Endothelial cell of umbilical vein (primary cell): ENCODE measurements at regions of chr13 and their contacts with region 1.

Region 1: GRCh38 chr13:56900549-56901279 is 240.0 kb upstream of the PRR20A start:
- DNase-seq: no peak
- H3K4me3 ChIP-seq: no peak overlapping the region
- H3K27ac ChIP-seq: no peak overlapping the region
- H3K4me1 ChIP-seq: no peaks in the 10 kb centered on the region
- H3K27me3 ChIP-seq: no peaks in the 10 kb centered on the region
- CTCF ChIP-seq: no peak
- POLR2A ChIP-seq: no peak

Region 2: DNA sequence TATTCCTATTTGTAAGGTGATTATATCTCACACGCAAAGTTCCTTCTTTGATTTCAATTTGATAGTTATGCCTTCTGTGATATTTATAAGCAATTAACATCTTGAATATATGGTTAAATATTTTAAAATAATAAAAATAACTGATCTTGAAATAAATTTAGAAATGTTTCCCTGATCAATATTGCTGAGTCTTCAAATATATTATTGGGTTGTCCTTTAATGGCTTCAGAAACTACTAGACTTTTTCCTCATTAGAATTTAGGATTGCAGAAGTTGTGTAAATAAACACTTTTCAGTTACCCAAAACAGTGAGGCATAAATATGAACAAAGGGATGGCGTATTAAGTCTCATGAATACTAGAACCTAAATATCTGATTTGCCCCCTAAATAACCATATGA is 12.3 kb before region 1 on chr13:
- CTCF ChIA-PET with region 1: interaction called, 10 read pairs
- POLR2A ChIA-PET with region 1: no interaction called
- dilution Hi-C with region 1: no loop called
- intact Hi-C with region 1: no loop called
- DNase-seq: no peak
- H3K4me3 ChIP-seq: no peak overlapping the region
- H3K27ac ChIP-seq: no peak overlapping the region
- H3K4me1 ChIP-seq: no peaks in the 10 kb centered on the region
- H3K27me3 ChIP-seq: no peaks in the 10 kb centered on the region
- CTCF ChIP-seq: no peak
- POLR2A ChIP-seq: no peak

Region 3: GRCh38 chr13:57314897-57315520 is 414.3 kb after region 1 on chr13:
- CTCF ChIA-PET with region 1: no interaction called
- POLR2A ChIA-PET with region 1: no interaction called
- dilution Hi-C with region 1: no loop called
- intact Hi-C with region 1: no loop called
- DNase-seq: no peak
- H3K4me3 ChIP-seq: no peak overlapping the region
- H3K27ac ChIP-seq: no peak overlapping the region
- H3K4me1 ChIP-seq: no peaks in the 10 kb centered on the region
- H3K27me3 ChIP-seq: no peaks in the 10 kb centered on the region
- CTCF ChIP-seq: no peak
- POLR2A ChIP-seq: no peak